ENCODE measurements at regions of chr6 and their contacts with region 1.

Region 1: GRCh38 chr6:130885392-130886192 is 58.4 kb downstream of the SMLR1 start:
- DNase-seq: peak; percentile 84
- ATAC-seq: peak; percentile 92
- H3K4me3 ChIP-seq: no peak overlapping the region
- H3K4me3 Mint-ChIP-seq: no peak overlapping the region
- H3K27ac ChIP-seq: no peak overlapping the region
- H3K27ac Mint-ChIP-seq: no peak overlapping the region
- H3K4me1 ChIP-seq: no peaks in the 10 kb centered on the region
- H3K4me1 Mint-ChIP-seq: no peaks in the 10 kb centered on the region
- H3K27me3 ChIP-seq: no peaks in the 10 kb centered on the region
- H3K27me3 Mint-ChIP-seq: no peaks in the 10 kb centered on the region
- CTCF ChIP-seq: peak; percentile 98

Region 2: DNA sequence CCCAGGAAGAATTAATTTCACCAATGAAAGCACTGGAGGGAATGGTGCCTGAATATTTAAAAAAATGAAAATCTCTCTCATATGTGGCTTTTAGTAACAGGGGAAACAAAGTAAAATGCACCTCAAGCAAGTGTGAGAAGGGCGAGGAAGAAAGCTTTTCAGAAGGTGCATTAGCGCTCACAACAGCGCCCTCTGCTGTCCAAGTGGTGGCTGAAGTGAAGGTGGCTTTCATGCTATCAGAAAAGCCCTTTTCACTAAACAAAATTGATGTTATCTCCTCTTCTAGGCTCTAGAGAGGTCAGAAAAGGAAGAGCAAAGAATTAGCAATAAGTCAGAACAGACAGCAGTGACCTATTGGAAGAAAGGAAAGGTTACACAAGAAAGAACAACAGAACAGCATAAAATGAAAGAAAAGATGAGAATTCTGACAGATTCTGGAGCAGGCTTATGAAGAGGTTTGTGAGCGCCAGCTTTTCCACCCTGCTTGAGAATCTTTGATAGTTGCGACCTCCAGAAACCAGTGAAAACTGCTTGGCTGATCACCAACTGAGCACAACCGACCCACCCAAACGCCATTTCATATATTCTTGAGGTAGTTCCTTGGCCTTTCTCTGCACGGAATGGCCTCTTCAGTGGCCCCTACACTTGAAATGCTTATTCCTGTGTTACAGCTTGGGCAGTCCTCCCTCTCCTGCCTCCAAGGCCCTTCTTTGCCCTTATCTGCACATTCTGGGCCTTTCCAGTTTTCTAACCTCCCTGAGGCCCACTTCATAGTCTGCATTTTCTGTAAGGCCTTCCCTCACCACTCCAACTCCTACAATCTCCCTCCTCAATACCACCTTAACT is 13.1 kb before region 1 on chr6:
- CTCF ChIA-PET with region 1: interaction called, 33 read pairs
- POLR2A ChIA-PET with region 1: no interaction called
- intact Hi-C with region 1: no loop called
- DNase-seq: peak; percentile 72
- ATAC-seq: peak; percentile 43
- H3K4me3 ChIP-seq: no peak overlapping the region
- H3K4me3 Mint-ChIP-seq: no peak overlapping the region
- H3K27ac ChIP-seq: no peak overlapping the region
- H3K27ac Mint-ChIP-seq: no peak overlapping the region
- H3K4me1 ChIP-seq: no peaks in the 10 kb centered on the region
- H3K4me1 Mint-ChIP-seq: no peaks in the 10 kb centered on the region
- H3K27me3 ChIP-seq: no peaks in the 10 kb centered on the region
- H3K27me3 Mint-ChIP-seq: no peaks in the 10 kb centered on the region
- CTCF ChIP-seq: peak; percentile 98

Region 3: DNA sequence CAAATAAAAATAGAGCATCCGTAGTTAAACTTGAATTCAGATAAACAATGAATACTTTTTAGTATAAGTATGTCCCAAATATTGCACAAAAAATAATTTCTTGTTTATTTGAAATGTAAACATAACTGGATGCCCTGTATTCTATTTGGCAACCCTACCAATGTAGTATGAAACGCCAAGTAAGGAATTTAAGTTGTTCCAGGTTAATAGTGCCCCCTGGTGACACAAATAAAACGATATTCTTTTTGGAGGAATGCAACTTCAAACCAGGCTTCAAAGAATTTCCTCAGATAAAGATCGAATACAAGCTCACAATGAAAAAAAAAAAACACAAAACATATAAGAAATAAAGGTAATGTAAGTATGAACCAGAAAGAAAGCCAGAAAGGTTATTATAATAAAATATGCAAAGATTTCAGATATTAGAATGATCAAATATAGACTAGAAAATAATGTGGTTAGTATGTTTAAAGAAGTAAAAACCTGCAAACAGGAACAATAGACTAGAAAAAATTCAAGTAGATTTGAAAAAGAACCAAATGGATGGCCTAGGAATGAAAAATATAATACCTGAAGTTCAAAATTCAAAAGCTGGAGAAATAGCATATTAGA is 231.3 kb after region 1 on chr6:
- CTCF ChIA-PET with region 1: interaction called, 316 read pairs
- POLR2A ChIA-PET with region 1: no interaction called
- intact Hi-C with region 1: loop called (anchors 1 kb)
- DNase-seq: peak; percentile 70
- ATAC-seq: peak; percentile 43
- H3K4me3 ChIP-seq: no peak overlapping the region
- H3K4me3 Mint-ChIP-seq: no peak overlapping the region
- H3K27ac ChIP-seq: no peak overlapping the region
- H3K27ac Mint-ChIP-seq: no peak overlapping the region
- H3K4me1 ChIP-seq: peaks cover 3 to 9% of the 10 kb centered on the region in 2 donors
- H3K4me1 Mint-ChIP-seq: peaks cover 11% of the 10 kb centered on the region
- H3K27me3 ChIP-seq: no peaks in the 10 kb centered on the region
- H3K27me3 Mint-ChIP-seq: no peaks in the 10 kb centered on the region
- CTCF ChIP-seq: peak; percentile 67

Region 4: DNA sequence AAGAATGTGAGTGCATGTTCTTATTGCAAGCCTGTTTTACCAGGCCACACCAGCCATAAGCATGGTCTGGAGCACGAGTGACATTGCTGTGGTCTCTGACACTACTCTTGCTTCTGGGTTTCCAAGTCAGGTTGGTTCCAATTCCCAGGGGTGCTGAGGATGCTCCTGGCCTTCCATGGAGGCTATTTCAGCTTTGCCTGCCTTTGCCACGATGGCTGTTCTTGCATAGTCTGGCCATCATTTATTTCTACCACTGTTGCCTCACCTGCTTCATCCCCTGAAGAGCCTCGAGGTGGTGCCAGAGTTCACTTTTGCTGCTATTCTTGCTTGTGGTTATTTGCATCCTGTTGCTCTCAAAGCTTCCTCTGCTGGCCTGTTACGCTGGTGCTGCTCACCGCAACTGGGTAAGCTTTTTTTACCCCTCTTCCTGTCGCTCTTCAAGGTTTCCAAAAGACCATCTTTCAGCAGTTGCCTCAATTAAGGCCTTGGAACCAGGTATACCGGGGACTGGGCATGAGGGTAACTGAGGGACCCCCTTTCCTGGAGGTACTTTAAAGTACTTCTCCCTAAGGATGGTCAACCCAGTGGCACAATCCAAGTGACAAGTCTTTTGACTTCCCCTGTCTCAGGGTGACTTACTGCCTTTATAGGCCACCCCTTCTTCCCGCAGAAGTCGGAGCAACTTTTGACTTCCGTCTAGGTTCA is 314.1 kb after region 1 on chr6:
- CTCF ChIA-PET with region 1: interaction called, 16 read pairs
- POLR2A ChIA-PET with region 1: no interaction called
- intact Hi-C with region 1: loop called (anchors 1 kb)
- DNase-seq: peak; percentile 88
- ATAC-seq: peak; percentile 99
- H3K4me3 ChIP-seq: peak overlapping the region; percentile 25 to 51 (median 40)
- H3K4me3 Mint-ChIP-seq: peak overlapping the region; percentile 72
- H3K27ac ChIP-seq: peak overlapping the region; percentile 80 to 92
- H3K27ac Mint-ChIP-seq: peak overlapping the region; percentile 90
- H3K4me1 ChIP-seq: peaks cover 28 to 41% of the 10 kb centered on the region in 2 donors
- H3K4me1 Mint-ChIP-seq: peaks cover 36% of the 10 kb centered on the region
- H3K27me3 ChIP-seq: no peaks in the 10 kb centered on the region
- H3K27me3 Mint-ChIP-seq: no peaks in the 10 kb centered on the region
- CTCF ChIP-seq: peak; percentile 79

Region 5: DNA sequence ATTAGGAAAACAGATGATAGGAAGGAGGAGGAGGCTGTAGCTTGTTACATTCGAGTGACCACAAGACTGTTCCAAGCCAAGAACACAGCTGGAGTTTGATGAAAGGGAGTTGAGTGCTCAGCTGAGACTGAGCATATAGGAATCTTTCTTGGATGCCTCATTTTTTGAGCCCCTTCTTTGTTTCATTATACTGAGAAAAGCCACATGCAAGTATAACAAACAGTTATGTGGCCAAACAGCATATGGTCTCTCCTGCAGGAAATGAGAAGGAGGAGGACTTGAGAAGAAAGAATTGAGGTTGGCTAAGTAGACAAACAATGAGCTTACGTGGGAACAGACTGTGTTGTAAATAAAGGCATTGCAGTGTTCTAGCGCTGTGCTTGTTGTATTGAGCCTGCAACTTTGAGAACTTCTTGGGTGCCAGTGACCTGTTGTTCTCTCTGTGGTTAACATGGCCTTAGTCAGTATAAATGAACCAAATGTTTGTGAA is 328.0 kb after region 1 on chr6:
- CTCF ChIA-PET with region 1: no interaction called
- POLR2A ChIA-PET with region 1: no interaction called
- intact Hi-C with region 1: no loop called
- DNase-seq: no peak
- ATAC-seq: no peak
- H3K4me3 ChIP-seq: no peak overlapping the region
- H3K4me3 Mint-ChIP-seq: no peak overlapping the region
- H3K27ac ChIP-seq: no peak overlapping the region
- H3K27ac Mint-ChIP-seq: no peak overlapping the region
- H3K4me1 ChIP-seq: no peaks in the 10 kb centered on the region
- H3K4me1 Mint-ChIP-seq: peaks cover 3% of the 10 kb centered on the region
- H3K27me3 ChIP-seq: no peaks in the 10 kb centered on the region
- H3K27me3 Mint-ChIP-seq: no peaks in the 10 kb centered on the region
- CTCF ChIP-seq: no peak

Region 6: GRCh38 chr6:131627724-131628682 is 742.4 kb after region 1 on chr6 and contains the start of gene MED23:
- CTCF ChIA-PET with region 1: interaction called, 13 read pairs
- POLR2A ChIA-PET with region 1: no interaction called
- intact Hi-C with region 1: loop called (anchors 1 kb)
- DNase-seq: peak; percentile 97
- ATAC-seq: peak; percentile 97
- H3K4me3 ChIP-seq: peak within 1 kb of the TSS; percentile 82 to 95 (median 87)
- H3K4me3 Mint-ChIP-seq: peak within 1 kb of the TSS; percentile 98
- H3K27ac ChIP-seq: peak within 1 kb of the TSS; percentile 58 to 71
- H3K27ac Mint-ChIP-seq: peak within 1 kb of the TSS; percentile 94
- H3K4me1 ChIP-seq: peaks cover 9 to 11% of the 10 kb centered on the region in 2 donors
- H3K4me1 Mint-ChIP-seq: peaks cover 25% of the 10 kb centered on the region
- H3K27me3 ChIP-seq: no peaks in the 10 kb centered on the region
- H3K27me3 Mint-ChIP-seq: peaks cover under 1% of the 10 kb centered on the region
- CTCF ChIP-seq: peak; percentile 97
- total RNA-seq, gene MED23: 55.4 and 57.1 TPM in 2 replicates